Mammary epithelial cell (primary cell): ENCODE measurements at regions of chr2 and their contacts with region 1.

Region 1: DNA sequence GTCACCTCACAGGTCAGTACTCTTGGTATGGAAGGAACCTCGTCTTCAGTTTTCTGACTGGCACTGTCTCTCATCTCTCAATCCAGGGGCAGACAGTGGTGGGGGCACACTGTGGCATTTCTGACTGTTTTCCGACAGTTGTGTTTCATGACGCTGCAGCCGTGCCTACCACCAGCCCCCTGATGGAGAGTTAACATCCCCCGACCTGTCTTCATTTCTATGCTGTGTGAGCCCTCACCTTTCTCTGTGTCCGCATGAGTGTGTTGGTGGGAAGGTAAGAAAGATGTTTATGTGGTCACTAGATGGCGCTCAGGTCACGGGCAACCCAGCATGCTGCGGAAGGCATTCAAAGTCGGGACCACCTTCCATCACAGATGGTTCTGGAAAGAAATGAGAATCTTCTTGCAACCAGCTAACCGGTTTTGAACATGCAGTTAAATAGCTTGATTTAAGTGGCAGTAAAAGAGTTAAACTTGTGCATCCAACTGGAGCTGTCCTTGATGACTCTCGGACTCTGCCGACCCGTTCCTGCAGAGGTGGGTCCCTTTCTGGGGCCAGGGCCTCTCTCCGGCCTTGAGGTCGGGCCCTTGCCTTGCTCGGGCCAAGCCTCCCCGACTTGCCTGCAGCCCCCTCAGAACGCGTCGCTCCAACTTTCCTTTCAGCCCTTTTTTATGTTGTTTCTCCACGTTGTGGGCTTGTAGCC is 92.4 kb downstream of the DYSF start:
- DNase-seq: peak; percentile 30
- H3K4me3 ChIP-seq: no peak overlapping the region
- H3K27ac ChIP-seq: no peak overlapping the region
- H3K4me1 ChIP-seq: peaks cover 4% of the 10 kb centered on the region
- H3K27me3 ChIP-seq: no peaks in the 10 kb centered on the region
- CTCF ChIP-seq: peak; percentile 71 to 87

Region 2: GRCh38 chr2:71609958-71610357 is 64.2 kb after region 1 on chr2:
- CTCF ChIA-PET with region 1: no interaction called
- dilution Hi-C with region 1: no loop called
- in situ Hi-C with region 1: no loop called
- intact Hi-C with region 1: loop called (anchors 5 kb)
- DNase-seq: peak; percentile 10
- H3K4me3 ChIP-seq: no peak overlapping the region
- H3K27ac ChIP-seq: no peak overlapping the region
- H3K4me1 ChIP-seq: no peaks in the 10 kb centered on the region
- H3K27me3 ChIP-seq: no peaks in the 10 kb centered on the region
- CTCF ChIP-seq: peak; percentile 6 to 42

Region 3: GRCh38 chr2:71784734-71785473 is 239.2 kb after region 1 on chr2:
- CTCF ChIA-PET with region 1: interaction called, 3 read pairs
- dilution Hi-C with region 1: no loop called
- in situ Hi-C with region 1: loop called in 1 of 2 experiments (anchors 5 kb)
- intact Hi-C with region 1: no loop called
- DNase-seq: peak; percentile 48
- H3K4me3 ChIP-seq: no peak overlapping the region
- H3K27ac ChIP-seq: no peak overlapping the region
- H3K4me1 ChIP-seq: peaks cover 9% of the 10 kb centered on the region
- H3K27me3 ChIP-seq: peaks cover 2% of the 10 kb centered on the region
- CTCF ChIP-seq: no peak

Region 4: DNA sequence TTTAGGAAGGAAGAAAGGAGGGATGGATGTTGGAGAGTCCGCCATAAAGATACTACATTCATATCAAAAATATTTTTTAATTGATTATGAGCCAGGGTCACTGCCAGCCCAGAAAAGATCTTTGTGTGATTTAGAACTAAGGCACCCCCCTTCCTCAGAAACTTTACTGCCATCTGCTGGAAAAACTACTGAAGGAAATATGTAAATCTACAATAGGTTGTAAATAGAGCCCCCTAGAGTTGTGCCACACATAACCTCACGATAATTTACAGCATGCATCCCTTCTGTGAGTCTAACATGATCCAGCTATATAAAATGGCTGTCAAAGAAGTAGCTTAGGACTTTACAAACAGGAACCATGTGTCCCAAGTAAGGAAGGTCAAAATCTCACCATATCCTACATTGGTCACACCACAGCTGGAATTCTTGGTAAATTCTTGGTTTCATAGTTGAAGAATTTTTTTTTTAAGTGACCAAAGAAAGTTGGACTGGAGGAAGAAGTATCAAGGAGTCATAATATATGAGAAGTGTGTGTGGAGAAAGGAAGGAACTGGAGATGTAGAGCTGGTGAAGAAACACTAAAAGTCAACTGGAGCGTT is 449.4 kb after region 1 on chr2:
- CTCF ChIA-PET with region 1: interaction called, 4 read pairs
- dilution Hi-C with region 1: no loop called
- in situ Hi-C with region 1: no loop called
- intact Hi-C with region 1: loop called (anchors 5 kb)
- DNase-seq: peak; percentile 8
- H3K4me3 ChIP-seq: no peak overlapping the region
- H3K27ac ChIP-seq: no peak overlapping the region
- H3K4me1 ChIP-seq: no peaks in the 10 kb centered on the region
- H3K27me3 ChIP-seq: no peaks in the 10 kb centered on the region
- CTCF ChIP-seq: peak; percentile 18 to 55

Region 5: GRCh38 chr2:72561621-72562318 is 1016.0 kb after region 1 on chr2:
- CTCF ChIA-PET with region 1: no interaction called
- dilution Hi-C with region 1: no loop called
- in situ Hi-C with region 1: loop called in 1 of 2 experiments (anchors 25 kb)
- intact Hi-C with region 1: no loop called
- DNase-seq: peak; percentile 44
- H3K4me3 ChIP-seq: no peak overlapping the region
- H3K27ac ChIP-seq: no peak overlapping the region
- H3K4me1 ChIP-seq: peaks cover 14% of the 10 kb centered on the region
- H3K27me3 ChIP-seq: no peaks in the 10 kb centered on the region
- CTCF ChIP-seq: no peak